Activated CD8-positive, alpha-beta T cell treated with anti-CD3 and anti-CD28 coated beads for 36 hours (primary cell): ENCODE measurements at regions of chr3 and their contacts with region 1.

Region 1: DNA sequence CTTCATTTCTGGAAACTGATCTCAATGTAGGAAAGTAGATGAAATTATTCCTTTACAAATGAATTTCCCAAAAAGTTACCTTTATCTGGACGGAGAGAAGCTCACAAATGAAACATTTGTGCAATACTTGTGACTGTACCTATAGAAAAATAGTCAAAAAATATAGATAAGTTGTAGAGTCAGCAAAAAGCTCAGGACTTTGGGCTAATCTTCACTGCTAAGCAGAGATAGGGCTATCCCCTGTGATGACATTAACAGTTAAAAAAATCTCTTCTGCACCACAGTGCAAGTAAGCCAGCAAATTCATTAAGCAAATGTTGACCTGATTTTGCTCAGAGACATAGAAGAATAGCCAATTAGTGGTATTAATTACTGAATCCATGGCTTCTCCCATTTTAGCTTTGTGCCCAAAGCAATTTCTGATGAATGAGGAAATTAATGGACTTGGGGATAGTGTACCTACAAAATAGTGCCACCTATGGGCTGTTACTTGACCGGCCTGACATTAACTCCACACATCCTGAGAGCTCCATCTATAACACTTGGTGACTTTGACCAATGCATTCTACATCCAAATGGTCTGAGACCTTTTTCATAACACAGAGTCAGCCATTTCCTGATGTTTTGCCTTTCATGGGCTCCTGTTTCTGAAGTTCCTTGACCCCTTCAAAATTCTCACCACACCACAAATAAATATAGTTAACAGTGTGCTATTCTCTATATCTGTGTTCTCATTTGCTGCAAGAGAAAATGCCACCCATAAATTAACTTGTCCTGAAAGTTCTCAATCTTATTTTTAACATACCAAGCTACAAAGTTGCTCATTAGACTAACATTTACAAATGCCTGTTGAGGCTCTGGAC is 105.0 kb downstream of the SSR3 start:
- DNase-seq: peak; percentile 8
- ATAC-seq: no peak
- H3K4me3 Mint-ChIP-seq: no peak overlapping the region
- H3K27ac Mint-ChIP-seq: no peak overlapping the region
- H3K4me1 Mint-ChIP-seq: no peaks in the 10 kb centered on the region
- H3K27me3 Mint-ChIP-seq: peaks cover 3% of the 10 kb centered on the region
- CTCF ChIP-seq: peak; percentile 63

Region 2: DNA sequence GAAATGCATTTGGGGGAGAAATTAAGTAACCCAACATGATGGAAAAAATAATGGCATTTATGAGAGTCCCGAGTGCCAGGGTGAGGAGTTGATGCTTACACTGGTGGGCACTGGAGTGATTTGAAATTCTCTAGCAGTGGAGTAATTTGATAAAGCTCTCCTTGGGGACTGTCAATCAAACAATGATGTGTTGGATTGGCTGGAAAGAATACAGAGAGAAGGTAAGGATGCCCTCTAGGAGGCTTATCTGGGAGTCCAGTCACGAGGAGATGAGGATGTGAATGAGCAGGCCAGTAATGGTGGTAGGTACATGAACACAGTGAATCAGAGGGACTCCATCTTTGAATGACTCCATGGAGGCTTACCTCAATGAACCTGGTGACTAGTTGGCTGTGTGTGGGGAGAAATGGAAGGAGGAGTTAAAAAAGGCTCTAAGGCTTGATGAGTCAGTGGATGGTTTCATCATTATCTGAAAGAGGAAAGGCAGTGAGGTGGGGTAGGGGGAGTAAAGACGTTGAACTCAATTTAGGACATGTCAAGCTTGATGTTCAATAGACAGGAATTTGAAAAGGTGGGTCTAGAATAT is 268.5 kb before region 1 on chr3:
- CTCF ChIA-PET with region 1: no interaction called
- POLR2A ChIA-PET with region 1: no interaction called
- intact Hi-C with region 1: no loop called
- DNase-seq: peak; percentile 14
- ATAC-seq: peak; percentile 92
- H3K4me3 Mint-ChIP-seq: no peak overlapping the region
- H3K27ac Mint-ChIP-seq: no peak overlapping the region
- H3K4me1 Mint-ChIP-seq: no peaks in the 10 kb centered on the region
- H3K27me3 Mint-ChIP-seq: peaks cover 1% of the 10 kb centered on the region
- CTCF ChIP-seq: no peak

Region 3: DNA sequence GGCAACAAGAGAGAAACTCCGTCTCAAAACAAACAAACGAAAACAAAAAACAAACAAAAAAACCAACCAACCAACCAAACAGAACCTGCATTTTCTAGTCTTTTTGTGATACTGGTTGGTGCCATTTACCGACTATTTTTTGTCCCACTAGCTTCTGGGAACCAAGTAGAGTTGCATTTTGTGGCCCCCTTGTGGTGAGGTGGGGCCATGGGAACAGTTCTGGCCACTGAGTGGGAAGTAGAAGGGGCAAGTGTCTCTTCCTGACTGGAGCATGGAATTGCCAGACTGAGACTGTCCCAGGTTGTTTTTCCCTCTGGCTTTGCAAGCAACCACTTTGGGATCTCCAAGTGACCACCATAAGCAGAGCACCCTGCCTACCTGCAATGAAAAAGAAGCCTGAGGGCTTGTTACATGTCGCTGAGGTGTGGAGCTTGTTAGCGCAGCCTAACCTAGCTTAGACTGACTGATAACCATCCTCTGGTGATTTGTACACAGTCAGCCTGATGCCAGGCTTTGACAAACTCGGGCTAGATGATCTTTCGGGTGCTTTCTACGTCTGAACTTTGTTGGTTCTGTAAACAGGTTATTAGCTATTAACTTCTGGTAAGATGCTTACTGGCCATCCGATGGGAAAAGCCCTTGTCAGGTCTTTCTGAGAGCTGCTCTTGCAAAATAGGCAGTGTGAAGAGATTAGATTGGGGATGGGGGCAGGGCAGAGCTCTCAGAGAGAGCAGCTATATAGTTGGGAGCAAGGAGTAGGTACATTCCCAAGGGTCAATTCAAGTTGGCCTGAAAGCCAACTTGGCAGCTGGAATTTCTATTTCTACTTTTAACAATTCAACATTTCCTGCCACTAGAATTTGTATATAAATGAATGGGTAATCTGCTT is 67.2 kb before region 1 on chr3:
- CTCF ChIA-PET with region 1: interaction called, 10 read pairs
- POLR2A ChIA-PET with region 1: no interaction called
- intact Hi-C with region 1: no loop called
- DNase-seq: peak; percentile 34
- ATAC-seq: no peak
- H3K4me3 Mint-ChIP-seq: no peak overlapping the region
- H3K27ac Mint-ChIP-seq: no peak overlapping the region
- H3K4me1 Mint-ChIP-seq: no peaks in the 10 kb centered on the region
- H3K27me3 Mint-ChIP-seq: no peaks in the 10 kb centered on the region
- CTCF ChIP-seq: peak; percentile 58

Region 4: DNA sequence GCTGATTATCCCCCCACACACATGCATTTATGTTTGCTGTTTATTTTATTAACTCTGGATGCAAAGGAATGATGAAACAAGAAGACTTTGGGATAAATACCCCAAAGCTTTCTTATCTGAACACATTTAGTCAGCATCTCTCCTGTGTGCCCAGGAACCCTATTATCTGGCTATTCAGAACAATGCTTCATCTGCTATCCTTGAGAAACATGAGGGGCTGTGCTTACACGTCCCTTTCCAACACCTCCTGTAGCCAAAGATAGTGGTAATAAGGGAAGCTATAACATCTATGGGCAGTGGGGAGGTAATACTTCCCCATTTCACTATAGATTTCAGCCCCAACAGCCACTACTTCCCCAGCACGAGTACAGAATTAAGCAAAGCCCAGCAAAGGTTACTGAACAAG is 10.3 kb after region 1 on chr3:
- CTCF ChIA-PET with region 1: interaction called, 12 read pairs
- POLR2A ChIA-PET with region 1: interaction called, 4 read pairs
- intact Hi-C with region 1: no loop called
- DNase-seq: no peak
- ATAC-seq: no peak
- H3K4me3 Mint-ChIP-seq: no peak overlapping the region
- H3K27ac Mint-ChIP-seq: no peak overlapping the region
- H3K4me1 Mint-ChIP-seq: no peaks in the 10 kb centered on the region
- H3K27me3 Mint-ChIP-seq: no peaks in the 10 kb centered on the region
- CTCF ChIP-seq: no peak

Region 5: GRCh38 chr3:156648086-156648485 is 198.1 kb after region 1 on chr3:
- CTCF ChIA-PET with region 1: no interaction called
- POLR2A ChIA-PET with region 1: no interaction called
- intact Hi-C with region 1: no loop called
- DNase-seq: no peak
- ATAC-seq: no peak
- H3K4me3 Mint-ChIP-seq: no peak overlapping the region
- H3K27ac Mint-ChIP-seq: no peak overlapping the region
- H3K4me1 Mint-ChIP-seq: peaks cover 12% of the 10 kb centered on the region
- H3K27me3 Mint-ChIP-seq: peaks cover 3% of the 10 kb centered on the region
- CTCF ChIP-seq: no peak